ENCODE measurements at regions of chr1 and their contacts with region 1.

Region 1: DNA sequence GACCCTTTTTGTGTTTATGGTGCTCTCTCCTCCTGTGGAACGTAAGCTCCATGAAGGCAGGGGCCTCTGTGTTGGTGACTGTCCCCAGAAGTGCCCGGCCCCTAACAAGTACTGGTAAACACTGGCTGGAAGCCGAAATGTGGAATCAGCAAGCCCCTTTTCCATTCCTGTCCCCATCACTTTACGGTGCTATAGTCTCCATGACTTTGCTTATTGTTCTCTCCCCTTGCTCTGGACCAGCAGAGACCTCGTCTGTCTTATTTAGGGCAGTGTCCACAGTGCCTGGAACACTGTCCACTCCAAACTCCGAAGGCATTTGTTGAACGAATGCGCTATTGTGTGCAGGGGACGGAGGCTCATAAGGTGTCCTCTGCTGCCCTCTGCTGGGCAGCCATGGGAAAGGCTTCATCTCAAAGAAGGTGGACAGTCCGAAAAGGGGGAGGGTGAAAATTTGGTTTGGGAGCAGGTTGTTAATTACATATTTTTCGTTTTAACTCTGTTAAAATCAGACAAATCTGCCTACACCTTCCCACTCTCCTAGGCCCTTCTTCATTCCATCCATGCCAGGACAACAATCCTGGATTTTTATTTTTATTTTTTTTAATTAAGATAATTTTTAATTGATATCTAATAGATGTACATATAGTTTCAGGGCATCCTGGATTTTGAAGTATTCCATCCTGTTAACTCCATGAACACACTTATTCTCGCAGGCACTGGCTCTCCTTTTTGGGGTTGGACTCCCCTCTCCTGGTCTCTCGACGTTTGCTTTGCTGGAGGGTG is 115.6 kb downstream of the PGBD5 start:
- H3K4me3 Mint-ChIP-seq: no peak overlapping the region
- H3K27ac Mint-ChIP-seq: no peak overlapping the region
- H3K4me1 Mint-ChIP-seq: peaks cover 5% of the 10 kb centered on the region
- H3K27me3 Mint-ChIP-seq: peaks cover 5% of the 10 kb centered on the region

Region 2: DNA sequence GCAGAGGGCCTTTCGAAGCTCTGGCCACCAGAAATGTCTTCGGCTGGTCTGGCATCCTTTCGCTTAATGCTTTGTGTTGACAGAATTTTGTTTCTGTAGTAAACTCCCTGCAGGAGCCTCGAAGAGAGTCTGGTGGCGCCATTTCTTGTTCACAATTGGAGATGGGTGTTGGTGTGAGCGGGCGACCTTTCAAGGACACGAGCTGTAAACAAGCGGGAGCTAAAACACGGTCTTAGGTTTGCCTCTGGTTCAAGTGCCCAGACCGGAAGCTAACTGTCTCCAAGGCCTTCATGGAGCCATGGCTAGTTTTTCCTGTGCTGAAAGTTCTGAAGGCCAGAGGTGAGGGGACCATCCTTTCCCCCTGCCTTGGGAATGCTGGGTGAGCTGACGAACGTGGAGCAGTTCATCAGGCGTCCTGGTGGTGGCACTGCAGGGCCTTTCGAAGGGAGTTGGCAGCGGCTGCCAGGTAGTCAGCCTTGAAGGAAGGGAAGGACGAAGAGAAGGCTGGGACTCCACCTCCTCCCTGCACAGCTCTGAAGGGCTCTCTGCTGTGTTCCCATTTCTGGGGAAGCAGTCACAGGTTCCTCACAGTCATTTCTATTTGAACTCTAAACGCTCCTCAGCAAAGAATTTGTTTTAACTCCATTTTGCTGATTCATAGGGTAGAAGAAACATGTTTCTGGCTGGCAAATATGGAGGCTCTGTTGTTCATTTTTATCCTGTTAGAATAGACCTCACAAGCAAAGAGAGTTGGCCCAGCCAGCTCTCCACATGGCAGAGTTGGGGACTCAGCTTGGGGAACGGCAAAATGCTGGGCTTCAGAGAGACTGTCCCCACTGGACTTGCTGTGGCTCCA is 649.3 kb before region 1 on chr1:
- intact Hi-C with region 1: loop called (anchors 1 kb)
- H3K4me3 Mint-ChIP-seq: no peak overlapping the region
- H3K27ac Mint-ChIP-seq: no peak overlapping the region
- H3K4me1 Mint-ChIP-seq: peaks cover 6% of the 10 kb centered on the region
- H3K27me3 Mint-ChIP-seq: no peaks in the 10 kb centered on the region

Region 3: GRCh38 chr1:229714964-229715603 is 595.5 kb before region 1 on chr1:
- intact Hi-C with region 1: loop called (anchors 5 kb)
- H3K4me3 Mint-ChIP-seq: no peak overlapping the region
- H3K27ac Mint-ChIP-seq: no peak overlapping the region
- H3K4me1 Mint-ChIP-seq: no peaks in the 10 kb centered on the region
- H3K27me3 Mint-ChIP-seq: no peaks in the 10 kb centered on the region

Region 4: GRCh38 chr1:230476622-230477003 is 166.0 kb after region 1 on chr1:
- intact Hi-C with region 1: no loop called
- H3K4me3 Mint-ChIP-seq: no peak overlapping the region
- H3K27ac Mint-ChIP-seq: no peak overlapping the region
- H3K4me1 Mint-ChIP-seq: peaks cover 6% of the 10 kb centered on the region
- H3K27me3 Mint-ChIP-seq: peaks cover 21% of the 10 kb centered on the region

Measured in dendritic cell treated with granulocyte-macrophage colony-stimulating factor and Interleukin-4, amounts not matched to agents 40 ng/mL and 50 ng/mL, for 4 days (primary cell).